Motor neuron (in vitro differentiated cells): ENCODE measurements at regions of chr3 and their contacts with region 1.

Region 1: GRCh38 chr3:141105828-141106628 is 54.9 kb downstream of the SPSB4 start:
- ATAC-seq: peak in 4 of 8 experiments; percentile 6 to 75 (median 58)
- H3K4me3 ChIP-seq: no peak overlapping the region
- H3K27ac ChIP-seq: no peak overlapping the region
- H3K4me1 ChIP-seq: peaks cover 58 to 65% of the 10 kb centered on the region in 2 donors

Region 2: DNA sequence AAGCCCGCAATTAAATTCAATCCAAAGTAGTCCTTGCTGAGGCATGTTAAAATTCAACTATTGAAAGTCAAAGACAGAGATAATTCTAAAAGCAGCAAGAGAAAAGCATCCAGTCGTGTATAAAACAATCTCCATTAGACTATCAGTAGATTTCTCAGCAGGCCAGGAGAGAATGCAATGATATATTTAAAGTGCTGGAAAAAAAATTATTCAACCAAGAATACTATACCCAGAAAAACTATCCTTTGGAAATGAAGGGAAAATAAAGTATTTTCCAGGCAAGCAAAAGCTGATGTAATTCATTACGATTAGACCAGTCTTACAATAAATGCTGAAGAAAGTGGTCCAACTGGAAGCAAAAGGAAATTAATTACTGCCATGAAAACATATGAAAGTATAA is 314.7 kb before region 1 on chr3:
- in situ Hi-C with region 1: no loop called
- ATAC-seq: no peak
- H3K4me3 ChIP-seq: no peak overlapping the region
- H3K27ac ChIP-seq: no peak overlapping the region
- H3K4me1 ChIP-seq: no peaks in the 10 kb centered on the region

Region 3: DNA sequence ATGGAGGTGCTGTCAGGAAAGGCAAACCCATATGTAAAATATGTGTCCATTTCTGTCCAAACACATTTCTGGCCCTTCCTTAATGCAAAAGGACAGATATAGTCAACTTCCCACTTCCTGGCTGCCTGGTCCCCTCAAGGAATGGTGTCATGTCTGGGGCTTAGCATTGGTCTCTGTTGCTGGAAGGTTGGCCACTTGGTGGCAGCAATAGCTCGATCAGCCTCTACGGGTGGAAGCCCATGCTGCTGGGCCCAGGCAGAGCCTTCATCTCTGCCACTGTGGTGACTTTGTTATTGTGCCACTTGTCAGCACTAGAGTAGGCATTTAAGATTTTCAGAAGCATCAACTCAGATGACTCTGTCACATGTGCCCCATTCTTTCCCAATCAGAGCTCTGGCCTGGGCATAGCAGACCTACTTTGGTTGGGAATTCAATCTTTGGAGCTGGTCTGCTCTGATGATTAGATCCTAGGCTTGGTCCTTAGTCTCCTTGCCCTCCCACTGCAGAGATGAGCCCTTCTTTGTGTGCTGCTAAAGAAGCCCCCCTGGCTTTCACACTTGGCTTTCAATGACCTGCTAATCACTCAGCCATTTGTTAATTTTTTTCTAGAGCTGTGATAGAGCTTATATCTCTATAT is 105.9 kb before region 1 on chr3:
- in situ Hi-C with region 1: loop called in 3 of 9 experiments (anchors 5 to 25 kb)
- ATAC-seq: peak; percentile 93 to 100 (median 98)
- H3K4me3 ChIP-seq: no peak overlapping the region
- H3K27ac ChIP-seq: no peak overlapping the region
- H3K4me1 ChIP-seq: no peaks in the 10 kb centered on the region

Region 4: GRCh38 chr3:141011232-141011996 is 94.6 kb before region 1 on chr3:
- in situ Hi-C with region 1: loop called in 2 of 9 experiments (anchors 25 kb)
- ATAC-seq: peak; percentile 82 to 100 (median 100)
- H3K4me3 ChIP-seq: no peak overlapping the region
- H3K27ac ChIP-seq: no peak overlapping the region
- H3K4me1 ChIP-seq: peaks cover 5 to 12% of the 10 kb centered on the region in 2 donors

Region 5: GRCh38 chr3:141050576-141051442 is 55.2 kb before region 1 on chr3 and contains the start of gene SPSB4:
- in situ Hi-C with region 1: loop called in 1 of 9 experiments (anchors 10 kb)
- ATAC-seq: peak; percentile 80 to 91 (median 86)
- H3K4me3 ChIP-seq: peak within 1 kb of the TSS; percentile 63 to 82 (median 73)
- H3K27ac ChIP-seq: peak within 1 kb of the TSS; percentile 79 to 87
- H3K4me1 ChIP-seq: peaks cover 22 to 25% of the 10 kb centered on the region in 2 donors
- total RNA-seq, gene SPSB4: 5.7 to 100 (median 27.3) TPM